ENCODE measurements at regions of chr1 and their contacts with region 1.

Region 1: DNA sequence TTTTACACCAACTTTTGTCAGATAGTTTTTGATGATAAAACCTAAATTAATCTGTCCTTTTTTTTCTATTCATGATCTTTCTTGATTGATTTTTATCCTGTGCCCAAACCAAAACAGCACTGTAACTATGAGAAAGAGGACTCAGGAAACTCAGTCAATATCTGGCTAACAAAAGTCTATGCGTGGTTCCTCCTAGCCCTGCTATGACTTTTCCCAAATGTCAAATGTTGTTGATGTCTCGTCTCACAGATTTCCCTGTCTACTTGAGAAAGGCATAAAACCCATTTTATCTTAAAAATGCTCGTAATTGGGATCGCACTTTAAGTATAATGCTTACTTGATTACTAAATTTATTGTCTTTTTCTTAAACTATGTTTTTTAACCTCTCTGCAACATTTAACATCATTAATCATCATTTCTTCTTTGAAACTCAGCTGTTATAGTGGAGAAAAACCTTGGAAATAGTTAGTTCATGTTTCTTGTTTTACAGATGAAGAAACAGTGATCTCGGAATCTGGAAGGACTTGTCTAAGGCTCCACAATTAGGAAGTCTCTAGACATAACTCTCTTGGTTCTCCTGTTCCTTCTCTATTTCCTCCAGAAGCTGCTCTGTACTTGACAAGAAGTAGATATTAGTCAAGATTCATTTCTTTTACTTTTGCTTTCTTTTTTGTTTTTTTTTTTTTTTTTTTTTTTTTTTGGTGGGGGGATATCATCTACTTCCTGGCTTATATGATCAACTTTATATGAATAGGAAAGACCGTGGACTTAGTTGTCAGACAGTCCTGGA is 26.2 kb upstream of the PTPRC start:
- DNase-seq: no peak
- ATAC-seq: peak; percentile 54
- H3K4me3 Mint-ChIP-seq: peak overlapping the region; percentile 77
- H3K27ac Mint-ChIP-seq: peak overlapping the region; percentile 94
- H3K4me1 Mint-ChIP-seq: peaks cover 71% of the 10 kb centered on the region
- H3K27me3 Mint-ChIP-seq: no peaks in the 10 kb centered on the region

Region 2: DNA sequence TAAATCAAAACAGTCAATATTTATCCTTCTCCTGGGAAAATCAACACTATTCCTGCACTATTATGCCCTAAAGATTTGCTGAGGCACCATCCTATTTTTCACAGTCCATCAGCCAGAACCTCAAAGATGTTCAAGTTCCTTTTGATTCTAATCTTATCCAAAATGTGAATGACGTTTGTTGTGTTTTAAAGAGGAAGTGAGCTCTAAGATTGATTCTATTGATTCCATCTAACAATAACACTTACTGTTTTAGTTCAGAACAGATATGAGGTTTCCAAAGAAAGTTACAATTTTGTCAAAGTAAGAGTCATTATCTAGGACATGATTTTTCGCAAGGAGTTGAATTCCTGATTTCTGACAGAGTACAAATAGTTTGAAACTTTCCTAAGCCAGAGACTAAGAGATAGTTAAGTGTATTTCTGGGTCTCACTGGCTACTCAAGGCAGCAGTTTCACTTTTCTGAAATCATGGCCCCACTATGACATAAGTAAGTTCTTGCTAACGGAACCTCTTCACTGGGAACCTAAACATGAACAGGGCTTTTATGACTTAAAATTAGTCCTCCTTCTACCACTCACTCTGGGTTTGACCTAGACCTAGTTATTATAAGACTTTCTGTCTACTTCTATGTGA is 610.8 kb before region 1 on chr1:
- CTCF ChIA-PET with region 1: no interaction called
- POLR2A ChIA-PET with region 1: no interaction called
- DNase-seq: no peak
- ATAC-seq: no peak
- H3K4me3 Mint-ChIP-seq: no peak overlapping the region
- H3K27ac Mint-ChIP-seq: no peak overlapping the region
- H3K4me1 Mint-ChIP-seq: no peaks in the 10 kb centered on the region
- H3K27me3 Mint-ChIP-seq: peaks cover 3% of the 10 kb centered on the region

Region 3: DNA sequence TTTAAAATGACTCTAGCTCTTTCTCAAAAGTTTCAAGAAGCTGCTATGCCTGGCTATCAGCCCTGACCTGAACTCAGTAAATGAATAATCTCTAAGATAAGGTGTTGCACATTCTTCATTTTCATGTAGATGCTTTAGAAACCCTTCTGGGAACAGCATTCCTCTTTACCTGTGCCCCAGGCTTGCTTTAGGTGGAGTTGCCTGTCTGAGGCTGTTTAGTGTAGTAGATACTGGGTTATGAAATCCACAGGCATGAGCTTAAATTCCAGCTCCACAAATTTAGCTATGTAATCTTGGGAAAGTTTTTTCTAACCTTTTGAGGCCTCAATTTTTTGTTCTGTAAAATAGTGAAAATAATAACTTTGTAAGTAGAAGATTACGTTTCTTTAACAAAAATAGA is 113.8 kb before region 1 on chr1:
- CTCF ChIA-PET with region 1: no interaction called
- POLR2A ChIA-PET with region 1: no interaction called
- DNase-seq: no peak
- ATAC-seq: no peak
- H3K4me3 Mint-ChIP-seq: no peak overlapping the region
- H3K27ac Mint-ChIP-seq: no peak overlapping the region
- H3K4me1 Mint-ChIP-seq: peaks cover 11% of the 10 kb centered on the region
- H3K27me3 Mint-ChIP-seq: no peaks in the 10 kb centered on the region

Region 4: DNA sequence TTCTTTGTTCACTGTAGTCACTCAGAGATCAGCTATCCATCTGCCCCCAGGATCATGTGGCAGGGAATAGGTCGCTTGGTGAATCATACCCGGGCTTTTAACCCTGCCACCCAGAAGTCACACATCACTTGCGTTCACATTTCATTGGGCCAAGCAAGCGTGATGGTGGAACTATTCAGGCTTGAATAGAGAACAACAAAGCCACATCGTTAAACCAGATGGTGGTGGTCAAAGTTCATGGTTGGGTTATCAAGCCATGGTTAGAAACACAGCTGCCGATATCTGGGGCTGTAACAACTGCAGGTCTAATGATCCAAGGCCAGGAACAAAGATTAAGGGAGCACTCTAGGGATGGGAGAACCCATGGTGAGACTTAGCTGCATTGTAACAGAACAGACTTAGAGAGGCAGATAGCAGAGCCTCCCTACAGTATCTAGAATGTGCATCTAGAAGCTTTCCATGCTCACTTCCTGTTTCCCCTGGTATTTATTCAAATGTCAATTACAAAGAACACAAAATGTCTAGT is 13.8 kb before region 1 on chr1:
- CTCF ChIA-PET with region 1: interaction called, 19 read pairs
- POLR2A ChIA-PET with region 1: interaction called, 4 read pairs
- DNase-seq: no peak
- ATAC-seq: peak; percentile 57
- H3K4me3 Mint-ChIP-seq: no peak overlapping the region
- H3K27ac Mint-ChIP-seq: peak overlapping the region; percentile 73
- H3K4me1 Mint-ChIP-seq: peaks cover 68% of the 10 kb centered on the region
- H3K27me3 Mint-ChIP-seq: no peaks in the 10 kb centered on the region

Region 5: GRCh38 chr1:198638894-198639635 is 26.4 kb after region 1 on chr1 and contains the start of gene PTPRC:
- CTCF ChIA-PET with region 1: interaction called, 5 read pairs
- POLR2A ChIA-PET with region 1: interaction called, 13 read pairs
- DNase-seq: peak; percentile 65
- ATAC-seq: peak; percentile 62
- H3K4me3 Mint-ChIP-seq: peak within 1 kb of the TSS; percentile 83
- H3K27ac Mint-ChIP-seq: peak within 1 kb of the TSS; percentile 97
- H3K4me1 Mint-ChIP-seq: peaks cover 48% of the 10 kb centered on the region
- H3K27me3 Mint-ChIP-seq: no peaks in the 10 kb centered on the region
- total RNA-seq, gene PTPRC: 604 to 619 TPM